H1 (cell line): ENCODE measurements at regions of chr5 and their contacts with region 1.

Region 1: DNA sequence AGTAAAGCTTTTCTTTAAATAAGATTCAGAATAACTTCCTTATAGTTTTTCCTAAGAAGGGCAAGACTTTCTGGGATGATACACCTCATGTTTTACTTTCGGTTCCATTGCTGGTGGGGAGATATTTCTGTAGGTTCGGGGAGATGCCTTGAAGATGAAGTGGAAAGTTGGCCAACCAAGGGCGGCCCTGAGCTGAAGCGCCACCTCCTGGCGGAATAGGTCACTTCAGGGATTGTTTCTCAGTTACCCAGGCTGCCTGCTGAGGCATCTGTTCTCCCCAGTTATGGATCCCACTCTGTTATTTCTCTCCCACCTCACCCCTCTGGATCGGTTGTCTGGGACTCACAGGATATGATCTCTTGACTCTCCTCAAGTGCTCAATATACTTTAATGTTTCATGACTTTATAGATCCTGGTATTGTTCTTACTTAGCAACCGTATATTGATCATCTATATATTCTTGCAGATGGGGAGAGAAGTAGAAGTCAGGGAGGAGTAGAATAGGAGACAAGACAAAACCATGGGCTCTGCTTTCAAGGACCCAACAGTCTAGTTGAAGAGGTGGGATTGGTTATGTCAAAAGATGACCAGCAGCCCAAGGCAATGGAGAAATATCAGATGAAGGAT is 23.4 kb downstream of the MEGF10 start:
- DNase-seq: peak in 1 of 2 experiments; percentile 89
- H3K4me3 ChIP-seq: no peak overlapping the region
- H3K27ac ChIP-seq: no peak overlapping the region
- H3K4me1 ChIP-seq: peaks cover 0 to 12% (median 6%) of the 10 kb centered on the region in 4 experiments; a peak in 5 of 7 replicates
- H3K27me3 ChIP-seq: no peaks in the 10 kb centered on the region
- CTCF ChIP-seq: peak; percentile 76 to 90 (median 87)
- EP300 ChIP-seq: 0 out of 3 replicates have a peak, but pooled peaks of 1 of the 2 experiments have one; percentile 25
- POLR2A ChIP-seq: no peak
- RAD21 ChIP-seq: peak; percentile 69 to 78

Region 2: DNA sequence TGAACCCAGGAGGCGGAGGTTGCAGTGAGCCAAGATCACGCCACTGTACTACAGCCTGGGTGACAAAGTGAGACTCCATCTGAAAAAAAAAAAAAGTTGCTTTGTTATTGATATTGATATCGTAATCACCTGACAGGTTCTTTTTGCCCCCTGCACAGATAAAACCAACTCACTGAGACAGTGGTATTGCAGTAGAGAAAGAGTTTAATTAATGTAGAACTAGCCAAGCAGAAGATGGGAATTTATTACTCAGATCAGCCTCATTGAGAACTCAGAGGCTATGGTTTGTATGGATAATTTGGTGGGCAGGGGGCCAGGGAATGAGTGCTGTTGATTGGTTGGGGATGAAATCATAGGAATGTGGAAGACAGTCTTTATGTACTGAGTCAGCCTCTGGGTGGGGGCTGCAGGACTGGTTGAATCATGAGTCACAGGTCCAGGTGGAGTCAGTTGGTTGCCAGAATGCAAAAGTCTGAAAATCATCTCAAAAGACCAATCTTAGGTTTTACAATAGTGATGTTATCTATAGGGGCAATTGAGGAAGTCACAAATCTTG is 59.2 kb before region 1 on chr5:
- CTCF ChIA-PET with region 1: no interaction called
- POLR2A ChIA-PET with region 1: no interaction called
- DNase-seq: no peak
- H3K4me3 ChIP-seq: no peak overlapping the region
- H3K27ac ChIP-seq: no peak overlapping the region
- H3K4me1 ChIP-seq: 0 out of 7 replicates have a peak, but pooled peaks cover 0 to 2% (median 0%) of the 10 kb centered on the region in 4 experiments
- H3K27me3 ChIP-seq: no peaks in the 10 kb centered on the region
- CTCF ChIP-seq: no peak
- EP300 ChIP-seq: no peak
- POLR2A ChIP-seq: no peak
- RAD21 ChIP-seq: no peak

Region 3: GRCh38 chr5:127280491-127281220 is 33.3 kb before region 1 on chr5:
- CTCF ChIA-PET with region 1: no interaction called
- POLR2A ChIA-PET with region 1: no interaction called
- DNase-seq: no peak
- H3K4me3 ChIP-seq: no peak overlapping the region
- H3K27ac ChIP-seq: no peak overlapping the region
- H3K4me1 ChIP-seq: 0 out of 7 replicates have a peak, but pooled peaks cover 0 to 1% (median 0%) of the 10 kb centered on the region in 4 experiments
- H3K27me3 ChIP-seq: no peaks in the 10 kb centered on the region
- CTCF ChIP-seq: no peak
- EP300 ChIP-seq: no peak
- POLR2A ChIP-seq: no peak
- RAD21 ChIP-seq: no peak

Region 4: DNA sequence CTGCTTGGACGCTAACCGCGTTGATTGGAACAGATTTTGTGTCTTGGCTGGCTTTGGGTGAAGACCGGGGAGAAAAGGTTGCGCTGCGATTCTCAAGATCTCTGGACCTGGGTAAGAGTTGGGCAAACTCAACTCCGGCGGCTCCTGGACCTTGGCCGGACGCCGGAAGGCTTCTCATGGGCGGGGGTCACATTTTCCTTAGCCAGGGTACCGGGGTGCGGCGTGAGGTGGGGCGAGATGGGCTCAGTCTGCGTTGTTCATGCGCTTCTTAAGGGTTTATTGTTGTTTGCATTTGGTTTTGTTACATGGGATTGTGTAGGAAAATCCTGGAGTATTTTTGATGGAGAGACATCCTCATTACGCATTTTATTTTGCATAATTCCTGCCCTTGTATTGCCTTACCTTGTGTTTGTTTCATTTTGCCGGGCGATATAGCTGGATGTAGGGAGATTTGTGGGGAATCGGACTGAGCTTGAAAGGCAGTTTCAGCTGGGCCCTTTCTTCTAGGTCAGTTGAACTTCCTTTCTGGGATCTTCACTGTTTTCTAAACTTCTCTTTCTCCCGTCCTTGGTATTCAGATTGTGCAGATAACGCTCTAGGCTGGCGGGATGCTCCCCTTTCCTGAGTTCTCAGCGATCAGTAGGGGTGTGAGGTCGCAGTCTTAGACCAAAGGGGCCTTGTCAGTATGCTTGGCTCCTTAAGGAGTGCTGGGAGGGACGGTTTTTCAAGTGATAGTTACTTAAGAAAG is 22.8 kb before region 1 on chr5:
- CTCF ChIA-PET with region 1: interaction called, 12 read pairs
- POLR2A ChIA-PET with region 1: no interaction called
- DNase-seq: no peak
- H3K4me3 ChIP-seq: peak overlapping the region; percentile 61 to 95 (median 92)
- H3K27ac ChIP-seq: no peak overlapping the region; the same call in 1 of the 2 replicates
- H3K4me1 ChIP-seq: peaks cover 1 to 21% (median 11%) of the 10 kb centered on the region in 4 experiments; a peak in 5 of 7 replicates
- H3K27me3 ChIP-seq: no peaks in the 10 kb centered on the region
- CTCF ChIP-seq: no peak
- EP300 ChIP-seq: no peak
- POLR2A ChIP-seq: no peak
- RAD21 ChIP-seq: no peak

Region 5: DNA sequence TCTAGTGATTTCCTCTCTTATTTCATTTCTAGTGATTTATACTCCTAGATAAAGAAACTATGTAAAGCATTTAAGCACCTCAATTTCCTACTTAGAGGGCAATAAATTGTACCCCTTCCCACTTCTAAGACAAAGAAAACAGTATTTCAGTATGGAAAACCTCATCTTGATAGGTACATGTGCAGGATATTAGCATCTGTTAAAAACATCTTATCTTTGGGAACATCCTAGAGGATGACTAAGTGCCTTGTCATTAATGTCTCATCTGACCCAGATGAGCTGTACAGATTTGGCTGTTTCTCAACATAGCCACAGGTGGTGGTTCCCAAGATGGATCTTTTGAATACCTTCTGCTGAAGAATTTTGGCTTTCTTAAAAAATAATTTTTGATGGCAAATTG is 17.6 kb before region 1 on chr5:
- CTCF ChIA-PET with region 1: interaction called, 17 read pairs
- POLR2A ChIA-PET with region 1: interaction called, 3 read pairs
- DNase-seq: no peak
- H3K4me3 ChIP-seq: no peak overlapping the region
- H3K27ac ChIP-seq: no peak overlapping the region
- H3K4me1 ChIP-seq: peaks cover 1 to 27% (median 24%) of the 10 kb centered on the region in 4 experiments; a peak in 5 of 7 replicates
- H3K27me3 ChIP-seq: no peaks in the 10 kb centered on the region
- CTCF ChIP-seq: no peak
- EP300 ChIP-seq: no peak
- POLR2A ChIP-seq: no peak
- RAD21 ChIP-seq: no peak

Region 6: DNA sequence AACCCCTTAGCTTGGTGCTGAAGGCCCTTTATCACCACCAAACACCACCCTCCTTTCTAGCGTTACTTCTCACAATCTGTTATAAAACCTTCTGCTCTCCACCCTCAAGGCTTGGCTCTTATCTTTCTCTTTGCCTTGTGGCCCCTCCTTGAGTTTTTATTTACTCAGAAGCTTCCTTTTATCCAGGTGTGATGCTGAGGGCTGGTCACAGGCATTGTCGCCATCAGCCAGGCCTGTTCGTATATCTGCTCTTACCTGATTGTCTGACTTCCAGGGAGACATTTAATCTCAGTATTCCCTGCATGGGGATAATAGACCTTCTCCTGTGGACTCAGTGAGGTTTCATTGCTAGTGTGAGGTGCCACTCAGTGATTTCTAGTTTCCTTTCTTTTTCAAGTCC is 10.8 kb after region 1 on chr5:
- CTCF ChIA-PET with region 1: interaction called, 10 read pairs
- POLR2A ChIA-PET with region 1: interaction called, 3 read pairs
- DNase-seq: no peak
- H3K4me3 ChIP-seq: no peak overlapping the region
- H3K27ac ChIP-seq: no peak overlapping the region
- H3K4me1 ChIP-seq: peaks cover 1 to 20% (median 18%) of the 10 kb centered on the region in 4 experiments; a peak in 6 of 7 replicates
- H3K27me3 ChIP-seq: no peaks in the 10 kb centered on the region
- CTCF ChIP-seq: no peak
- EP300 ChIP-seq: no peak
- POLR2A ChIP-seq: no peak
- RAD21 ChIP-seq: no peak